ENCODE measurements at regions of chr19 and their contacts with region 1.

Region 1: GRCh38 chr19:18683213-18683939 is at the start of gene CRTC1:
- DNase-seq: peak; percentile 95
- total RNA-seq, gene CRTC1: 8.8 TPM

Region 2: GRCh38 chr19:18831524-18832305 is 148.3 kb after region 1 on chr19 and contains the start of gene UPF1:
- intact Hi-C with region 1: loop called (anchors 5 kb)
- DNase-seq: peak; percentile 98
- total RNA-seq, gene UPF1: 40.2 TPM

Measured in cardiac septum (tissue), 1 donor.